ENCODE measurements at regions of chr4 and their contacts with region 1.

Region 1: DNA sequence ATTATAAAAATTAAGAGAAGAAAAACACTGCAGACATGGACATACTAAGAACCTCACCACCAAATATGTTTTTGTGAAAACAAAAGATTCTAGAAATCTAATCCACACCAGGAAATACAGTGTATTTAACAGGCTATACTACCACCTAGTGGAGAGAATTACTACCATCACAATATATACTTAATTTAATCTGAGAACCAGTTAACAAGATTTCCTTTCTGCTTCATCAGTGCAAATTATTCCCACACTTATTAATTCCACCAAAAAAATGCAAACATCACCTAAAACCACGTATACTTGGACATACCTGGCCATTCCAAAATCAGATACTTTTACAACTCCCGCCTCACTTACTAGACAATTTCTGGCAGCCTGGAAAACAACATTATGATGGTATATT is 7.0 kb upstream of the TXK start:
- DNase-seq: no peak
- H3K4me3 Mint-ChIP-seq: no peak overlapping the region
- H3K27ac Mint-ChIP-seq: no peak overlapping the region
- H3K4me1 Mint-ChIP-seq: peaks cover 46% of the 10 kb centered on the region
- H3K27me3 Mint-ChIP-seq: no peaks in the 10 kb centered on the region

Region 2: DNA sequence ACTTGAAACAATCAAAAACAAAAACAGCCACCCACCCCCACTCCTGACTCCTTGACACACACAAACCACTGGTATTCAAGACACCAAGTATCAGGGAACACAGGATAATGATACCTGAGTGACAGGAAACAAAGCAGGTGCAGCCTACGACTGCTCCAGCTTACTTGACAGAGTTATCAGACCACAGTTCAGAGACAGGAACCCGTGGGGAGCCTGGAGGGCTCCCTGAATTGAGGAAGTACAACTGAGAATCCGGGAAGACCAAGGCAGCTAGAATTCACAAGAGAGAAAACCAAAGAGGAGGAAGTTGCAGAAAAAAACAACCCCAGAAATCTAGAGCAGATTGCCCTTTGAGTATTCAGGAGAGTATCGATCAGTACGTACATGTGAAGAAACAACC is 698.1 kb before region 1 on chr4:
- CTCF ChIA-PET with region 1: no interaction called
- intact Hi-C with region 1: no loop called
- DNase-seq: no peak
- H3K4me3 Mint-ChIP-seq: no peak overlapping the region
- H3K27ac Mint-ChIP-seq: no peak overlapping the region
- H3K4me1 Mint-ChIP-seq: peaks cover 3% of the 10 kb centered on the region
- H3K27me3 Mint-ChIP-seq: no peaks in the 10 kb centered on the region

Region 3: GRCh38 chr4:47668810-47669408 is 472.1 kb before region 1 on chr4:
- CTCF ChIA-PET with region 1: no interaction called
- intact Hi-C with region 1: loop called (anchors 1 kb)
- DNase-seq: peak; percentile 27
- H3K4me3 Mint-ChIP-seq: no peak overlapping the region
- H3K27ac Mint-ChIP-seq: no peak overlapping the region
- H3K4me1 Mint-ChIP-seq: no peaks in the 10 kb centered on the region
- H3K27me3 Mint-ChIP-seq: peaks cover 5% of the 10 kb centered on the region

Region 4: DNA sequence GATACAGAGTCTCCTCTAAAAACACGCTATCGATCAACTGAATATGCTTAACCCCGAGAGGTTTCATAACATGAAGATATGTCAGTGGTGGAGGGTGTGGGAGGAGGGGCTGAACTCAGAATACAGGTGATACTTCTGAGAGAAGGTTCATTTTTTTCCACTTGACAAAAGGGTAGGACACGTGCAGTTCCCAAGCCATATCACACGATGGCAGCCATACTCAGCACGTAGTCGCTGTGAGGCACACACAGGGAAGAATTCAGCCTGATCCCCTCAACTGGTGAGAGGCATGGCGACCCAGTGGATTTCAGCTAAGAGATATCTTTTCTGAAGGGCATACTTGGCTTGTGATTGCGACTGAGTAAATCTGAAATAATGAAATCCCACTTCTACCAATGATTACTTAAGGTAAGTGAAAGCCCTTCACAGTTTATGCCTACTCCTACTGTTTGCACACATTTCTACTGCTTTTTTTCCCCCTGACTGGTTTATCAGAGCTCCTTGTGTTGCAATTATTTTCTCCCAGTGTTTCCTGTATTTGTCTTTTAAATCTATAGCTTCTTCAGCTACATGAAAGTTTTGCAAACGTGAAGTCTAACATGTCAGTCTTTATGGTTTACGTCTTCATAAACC is 436.2 kb before region 1 on chr4:
- CTCF ChIA-PET with region 1: no interaction called
- intact Hi-C with region 1: loop called (anchors 5 kb)
- DNase-seq: peak; percentile 37
- H3K4me3 Mint-ChIP-seq: no peak overlapping the region
- H3K27ac Mint-ChIP-seq: no peak overlapping the region
- H3K4me1 Mint-ChIP-seq: no peaks in the 10 kb centered on the region
- H3K27me3 Mint-ChIP-seq: peaks cover 15% of the 10 kb centered on the region

Region 5: GRCh38 chr4:47990145-47990544 is 150.9 kb before region 1 on chr4:
- CTCF ChIA-PET with region 1: no interaction called
- intact Hi-C with region 1: no loop called
- DNase-seq: no peak
- H3K4me3 Mint-ChIP-seq: no peak overlapping the region
- H3K27ac Mint-ChIP-seq: no peak overlapping the region
- H3K4me1 Mint-ChIP-seq: peaks cover 16% of the 10 kb centered on the region
- H3K27me3 Mint-ChIP-seq: no peaks in the 10 kb centered on the region

Region 6: GRCh38 chr4:48008021-48008596 is 132.9 kb before region 1 on chr4:
- CTCF ChIA-PET with region 1: interaction called, 3 read pairs
- intact Hi-C with region 1: loop called (anchors 1 kb)
- DNase-seq: no peak
- H3K4me3 Mint-ChIP-seq: no peak overlapping the region
- H3K27ac Mint-ChIP-seq: no peak overlapping the region
- H3K4me1 Mint-ChIP-seq: no peaks in the 10 kb centered on the region
- H3K27me3 Mint-ChIP-seq: no peaks in the 10 kb centered on the region

Region 7: GRCh38 chr4:48065587-48066052 is 75.4 kb before region 1 on chr4:
- CTCF ChIA-PET with region 1: interaction called, 3 read pairs
- intact Hi-C with region 1: loop called (anchors 1 kb)
- DNase-seq: peak; percentile 48
- H3K4me3 Mint-ChIP-seq: no peak overlapping the region
- H3K27ac Mint-ChIP-seq: peak overlapping the region; percentile 44
- H3K4me1 Mint-ChIP-seq: peaks cover 36% of the 10 kb centered on the region
- H3K27me3 Mint-ChIP-seq: no peaks in the 10 kb centered on the region

Region 8: DNA sequence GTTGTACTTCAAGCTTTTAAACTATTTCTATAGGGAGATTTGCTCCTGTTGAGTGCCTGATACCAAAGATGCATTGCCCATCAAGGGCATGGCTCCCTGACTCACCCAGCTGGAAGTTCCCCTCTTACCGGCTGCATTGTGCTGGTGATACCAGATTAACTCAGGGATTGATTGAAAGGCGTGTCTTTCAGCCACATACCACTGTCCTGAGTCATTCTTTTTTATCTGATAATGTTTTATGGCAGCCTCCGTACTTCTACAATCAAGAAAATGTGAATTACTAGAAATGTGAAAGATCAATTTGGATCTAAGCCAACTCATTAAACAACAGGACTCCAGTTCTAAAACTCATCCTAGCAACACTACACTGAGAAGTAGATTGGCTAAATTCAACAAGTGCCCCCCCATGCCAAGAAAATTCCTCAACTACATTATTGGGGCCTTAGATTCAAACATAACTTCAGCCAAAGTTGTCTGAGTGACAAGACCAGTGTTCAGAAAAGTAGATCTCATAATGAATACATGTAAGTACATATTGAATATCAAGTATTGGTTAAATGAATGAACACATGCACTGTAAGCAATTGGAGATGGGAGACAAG is 47.0 kb before region 1 on chr4:
- CTCF ChIA-PET with region 1: interaction called, 10 read pairs
- intact Hi-C with region 1: no loop called
- DNase-seq: peak; percentile 78
- H3K4me3 Mint-ChIP-seq: no peak overlapping the region
- H3K27ac Mint-ChIP-seq: peak overlapping the region; percentile 61
- H3K4me1 Mint-ChIP-seq: peaks cover 21% of the 10 kb centered on the region
- H3K27me3 Mint-ChIP-seq: no peaks in the 10 kb centered on the region

Region 9: DNA sequence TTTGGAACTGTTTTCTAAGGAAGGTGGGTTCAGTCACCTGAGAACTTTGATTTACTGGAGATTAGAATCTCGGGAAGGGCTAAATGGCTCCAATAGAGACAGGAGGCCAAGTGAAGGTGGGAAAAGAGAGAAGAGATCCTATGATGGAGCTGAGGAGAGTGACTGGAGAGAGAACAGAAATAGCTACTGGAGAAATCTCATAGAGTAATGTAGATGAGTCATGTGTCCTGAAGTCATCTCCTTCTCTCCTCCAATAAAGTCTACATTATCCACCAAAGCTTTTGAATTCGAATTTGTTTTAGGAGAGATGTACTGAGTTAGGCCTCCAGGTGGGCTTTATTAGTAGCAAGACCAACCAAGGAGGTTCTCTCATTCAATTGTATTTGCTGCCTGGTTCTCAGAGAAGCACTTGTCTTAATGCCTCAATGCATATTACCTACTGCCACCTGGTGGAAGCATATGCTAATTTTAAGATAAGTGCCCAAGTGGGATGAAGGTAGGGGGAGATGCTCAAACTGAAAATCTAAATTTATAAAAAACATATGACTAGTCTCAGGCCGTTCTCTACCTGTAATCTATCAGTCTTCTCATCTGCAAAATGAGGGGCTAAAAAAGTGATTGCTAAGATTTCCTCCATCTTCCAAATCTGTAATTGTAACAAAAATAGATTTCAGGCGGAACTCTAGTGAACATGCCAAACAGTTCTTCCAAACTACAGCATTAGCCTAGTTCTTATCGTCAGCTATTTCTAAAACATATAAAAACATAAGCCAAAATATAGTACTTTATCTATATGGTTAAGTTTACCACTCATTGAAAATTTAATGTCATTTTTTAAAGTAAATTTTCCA is 31.4 kb before region 1 on chr4:
- CTCF ChIA-PET with region 1: interaction called, 33 read pairs
- intact Hi-C with region 1: loop called (anchors 1 kb)
- DNase-seq: no peak
- H3K4me3 Mint-ChIP-seq: no peak overlapping the region
- H3K27ac Mint-ChIP-seq: peak overlapping the region; percentile 75
- H3K4me1 Mint-ChIP-seq: peaks cover 63% of the 10 kb centered on the region
- H3K27me3 Mint-ChIP-seq: no peaks in the 10 kb centered on the region

Measured in activated naive CD4-positive, alpha-beta T cell treated with anti-CD3 and anti-CD28 coated beads for 36 hours (primary cell).